Dorsolateral prefrontal cortex (tissue), 120 donors: ENCODE measurements at regions of chr16 and their contacts with region 1.

Region 1: DNA sequence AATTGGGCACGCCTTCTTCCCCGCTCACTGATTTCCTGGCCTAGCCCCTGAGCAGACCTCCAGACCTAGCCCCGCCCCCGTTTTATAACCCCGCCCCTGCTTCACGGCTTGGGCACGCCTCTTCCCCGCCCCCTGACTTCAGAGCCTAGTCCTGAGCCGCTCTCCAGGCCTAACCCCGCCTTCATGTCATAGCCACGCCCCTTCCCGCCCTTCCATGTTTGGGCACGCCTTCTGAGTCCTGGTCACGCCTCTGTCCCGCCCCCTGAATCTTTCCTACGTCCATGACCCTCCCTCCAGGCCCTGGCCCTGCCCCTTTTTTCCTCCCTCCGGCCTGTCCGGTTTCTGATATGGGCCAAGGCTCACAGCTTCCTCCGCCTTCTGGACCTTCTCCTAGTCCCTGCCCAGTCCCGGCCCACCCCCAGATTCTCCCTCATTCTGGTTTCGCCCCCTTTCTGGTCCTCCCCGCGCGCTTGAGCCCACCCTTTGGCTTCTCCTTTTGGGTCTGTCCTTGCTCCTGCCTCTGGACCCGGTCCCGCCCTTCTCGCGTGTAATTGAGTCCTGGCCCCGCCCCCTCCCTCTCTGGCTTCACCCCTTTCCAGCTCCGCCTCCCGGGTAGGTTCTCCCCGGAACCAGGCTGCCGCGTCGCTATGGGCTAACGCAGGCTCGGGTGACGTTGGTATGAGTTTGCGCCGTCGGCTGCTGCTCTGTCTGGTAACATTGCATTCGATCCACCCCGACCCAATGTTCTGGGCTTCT is 15.1 kb upstream of the EEF2K start:
- DNase-seq: peak; percentile 98 to 100 (median 100)
- H3K4me3 ChIP-seq: peak overlapping the region; percentile 68 to 96 (median 88)
- H3K27ac ChIP-seq: peak overlapping the region; percentile 82 to 99 (median 97)
- H3K27me3 ChIP-seq: no peaks in the 10 kb centered on the region
- CTCF ChIP-seq: peak in 5 of 56 donors; percentile 5 to 13 (median 8)

Region 2: DNA sequence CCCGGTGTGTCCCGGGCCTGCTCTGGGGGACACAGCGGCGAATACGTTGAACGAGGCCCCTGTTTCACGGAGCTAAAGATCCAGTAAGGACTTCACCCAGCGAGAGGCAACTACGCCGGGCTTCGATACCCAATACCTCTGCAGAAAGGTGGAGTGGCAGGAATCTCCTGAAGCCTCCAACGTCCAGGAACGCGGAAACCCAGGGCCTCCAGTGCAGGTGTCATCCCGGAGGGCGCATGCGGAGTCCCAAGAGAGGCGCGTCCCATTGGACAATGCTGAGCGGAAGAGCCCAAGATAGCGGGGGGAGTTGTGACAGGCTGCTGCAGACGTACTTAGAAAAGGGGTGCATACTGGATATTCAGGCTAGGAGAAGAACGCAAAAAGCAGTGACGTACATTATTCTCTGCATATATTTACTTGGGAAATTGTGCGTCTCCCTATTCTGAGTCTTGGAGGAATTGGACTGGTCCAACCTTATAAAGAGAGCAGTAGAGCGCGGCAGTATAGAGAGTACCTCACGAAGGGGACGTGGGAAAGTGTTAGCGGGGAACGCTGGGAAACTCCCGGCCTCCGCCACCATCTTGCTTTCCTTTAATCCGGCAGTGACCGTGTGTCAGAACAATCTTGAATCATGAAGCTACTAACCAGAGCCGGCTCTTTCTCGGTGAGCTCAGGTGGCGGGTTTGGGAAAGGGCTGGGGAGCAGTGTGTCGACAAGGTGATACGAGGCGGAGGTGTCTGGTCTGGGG is 238.0 kb before region 1 on chr16 and contains the start of gene UQCRC2:
- intact Hi-C with region 1: loop called (anchors 2 to 5 kb)
- DNase-seq: peak; percentile 85 to 96 (median 92)
- H3K4me3 ChIP-seq: peak within 1 kb of the TSS; percentile 67 to 100 (median 94)
- H3K27ac ChIP-seq: peak within 1 kb of the TSS; percentile 92 to 100 (median 98)
- H3K27me3 ChIP-seq: no peaks in the 10 kb centered on the region
- CTCF ChIP-seq: peak in 20 of 56 donors; percentile 2 to 42 (median 18)
- total RNA-seq, gene UQCRC2: 215 to 422 (median 323) TPM

Region 3: GRCh38 chr16:22098405-22099255 is 92.3 kb before region 1 on chr16:
- intact Hi-C with region 1: loop called in 1 of 2 experiments (anchors 10 kb)
- DNase-seq: no peak
- H3K4me3 ChIP-seq: peak overlapping the region in 12 of 59 donors; percentile 14 to 34 (median 22)
- H3K27ac ChIP-seq: no peak overlapping the region
- H3K27me3 ChIP-seq: no peaks in the 10 kb centered on the region
- CTCF ChIP-seq: peak in 55 of 56 donors; percentile 26 to 71 (median 60)

Region 4: GRCh38 chr16:22297114-22297878 is 106.3 kb after region 1 on chr16 and contains the start of gene POLR3E:
- intact Hi-C with region 1: loop called (anchors 1 kb)
- DNase-seq: peak; percentile 98 to 99 (median 98)
- H3K4me3 ChIP-seq: peak within 1 kb of the TSS; percentile 55 to 98 (median 89)
- H3K27ac ChIP-seq: peak within 1 kb of the TSS; percentile 66 to 97 (median 91)
- H3K27me3 ChIP-seq: no peaks in the 10 kb centered on the region
- CTCF ChIP-seq: peak; percentile 84 to 100 (median 96)
- total RNA-seq, gene POLR3E: 29.2 to 66.1 (median 45.5) TPM